H1 (cell line): ENCODE measurements at regions of chr1 and their contacts with region 1.

Region 1: GRCh38 chr1:110150330-110151174 is at the start of gene SLC6A17:
- DNase-seq: peak in 1 of 2 experiments; percentile 81
- H3K4me3 ChIP-seq: peak within 1 kb of the TSS; percentile 30 to 65 (median 44)
- H3K27ac ChIP-seq: no peak within 1 kb of the TSS
- H3K4me1 ChIP-seq: peaks cover 0 to 5% (median 2%) of the 10 kb centered on the region in 4 experiments; a peak in 3 of 7 replicates
- H3K27me3 ChIP-seq: peaks cover 37 to 86% (median 68%) of the 10 kb centered on the region in 4 experiments
- CTCF ChIP-seq: peak in 1 of 3 experiments; percentile 21; a peak in 1 of 4 replicates
- EP300 ChIP-seq: no peak
- POLR2A ChIP-seq: no peak
- RAD21 ChIP-seq: no peak
- total RNA-seq, gene SLC6A17: 0.28 and 0.29 TPM in 2 replicates

Region 2: DNA sequence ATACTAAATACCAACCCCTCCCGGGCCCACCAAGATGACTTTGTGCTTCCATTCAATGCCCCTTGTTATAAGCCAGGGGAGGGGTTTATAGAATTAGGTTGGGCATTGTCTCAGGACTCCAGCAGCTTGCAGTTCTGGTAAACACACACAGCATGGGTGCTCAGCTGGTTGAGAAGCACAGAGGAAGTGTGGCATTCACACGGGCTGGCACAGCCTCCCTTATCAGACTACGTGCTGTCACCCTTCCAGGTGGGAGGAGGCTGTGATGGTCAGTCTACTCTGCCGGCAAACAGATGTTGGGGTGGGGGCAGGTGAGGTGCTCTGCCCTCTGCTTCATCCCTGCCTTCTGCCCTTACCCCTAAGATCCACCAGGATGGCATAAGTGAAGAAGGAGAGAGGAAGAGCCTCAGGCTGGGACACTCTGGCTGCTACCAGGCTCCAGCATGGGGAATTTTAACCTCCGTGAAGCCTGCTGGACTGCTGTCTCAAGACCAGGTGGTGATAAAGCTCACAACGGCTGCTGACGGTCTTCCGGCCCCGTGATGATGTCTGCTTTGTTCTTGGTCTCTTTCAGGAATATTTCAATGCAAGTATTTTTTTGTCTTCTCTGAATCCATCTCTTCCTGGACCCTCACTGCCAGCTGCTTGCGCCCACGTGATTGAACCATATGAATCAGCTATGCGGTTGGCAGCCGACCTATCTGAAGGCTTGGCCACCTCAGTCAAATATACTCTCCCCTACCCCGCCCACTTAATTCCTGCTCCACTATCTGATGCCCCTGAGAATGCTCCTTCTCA is 15.1 kb before region 1 on chr1:
- CTCF ChIA-PET with region 1: interaction called, 10 read pairs
- POLR2A ChIA-PET with region 1: interaction called, 3 read pairs
- DNase-seq: no peak
- H3K4me3 ChIP-seq: no peak overlapping the region
- H3K27ac ChIP-seq: no peak overlapping the region
- H3K4me1 ChIP-seq: peaks cover 7 to 25% (median 17%) of the 10 kb centered on the region in 4 experiments
- H3K27me3 ChIP-seq: peaks cover 0 to 2% (median 0%) of the 10 kb centered on the region in 4 experiments; a peak in 3 of 7 replicates
- CTCF ChIP-seq: no peak
- EP300 ChIP-seq: no peak
- POLR2A ChIP-seq: no peak
- RAD21 ChIP-seq: no peak

Region 3: GRCh38 chr1:110161877-110162276 is 11.3 kb after region 1 on chr1:
- CTCF ChIA-PET with region 1: interaction called, 19 read pairs
- POLR2A ChIA-PET with region 1: interaction called, 4 read pairs
- DNase-seq: no peak
- H3K4me3 ChIP-seq: no peak overlapping the region
- H3K27ac ChIP-seq: no peak overlapping the region
- H3K4me1 ChIP-seq: no peaks in the 10 kb centered on the region; a peak in 1 of 7 replicates
- H3K27me3 ChIP-seq: no peaks in the 10 kb centered on the region; a peak in 1 of 7 replicates
- CTCF ChIP-seq: no peak
- EP300 ChIP-seq: no peak
- POLR2A ChIP-seq: no peak
- RAD21 ChIP-seq: no peak

Region 4: GRCh38 chr1:110188035-110188618 is 37.6 kb after region 1 on chr1:
- CTCF ChIA-PET with region 1: no interaction called
- POLR2A ChIA-PET with region 1: no interaction called
- DNase-seq: no peak
- H3K4me3 ChIP-seq: no peak overlapping the region
- H3K27ac ChIP-seq: no peak overlapping the region
- H3K4me1 ChIP-seq: peaks cover 0 to 2% (median 0%) of the 10 kb centered on the region in 4 experiments; a peak in 1 of 7 replicates
- H3K27me3 ChIP-seq: no peaks in the 10 kb centered on the region
- CTCF ChIP-seq: no peak
- EP300 ChIP-seq: no peak
- POLR2A ChIP-seq: no peak
- RAD21 ChIP-seq: no peak

Region 5: DNA sequence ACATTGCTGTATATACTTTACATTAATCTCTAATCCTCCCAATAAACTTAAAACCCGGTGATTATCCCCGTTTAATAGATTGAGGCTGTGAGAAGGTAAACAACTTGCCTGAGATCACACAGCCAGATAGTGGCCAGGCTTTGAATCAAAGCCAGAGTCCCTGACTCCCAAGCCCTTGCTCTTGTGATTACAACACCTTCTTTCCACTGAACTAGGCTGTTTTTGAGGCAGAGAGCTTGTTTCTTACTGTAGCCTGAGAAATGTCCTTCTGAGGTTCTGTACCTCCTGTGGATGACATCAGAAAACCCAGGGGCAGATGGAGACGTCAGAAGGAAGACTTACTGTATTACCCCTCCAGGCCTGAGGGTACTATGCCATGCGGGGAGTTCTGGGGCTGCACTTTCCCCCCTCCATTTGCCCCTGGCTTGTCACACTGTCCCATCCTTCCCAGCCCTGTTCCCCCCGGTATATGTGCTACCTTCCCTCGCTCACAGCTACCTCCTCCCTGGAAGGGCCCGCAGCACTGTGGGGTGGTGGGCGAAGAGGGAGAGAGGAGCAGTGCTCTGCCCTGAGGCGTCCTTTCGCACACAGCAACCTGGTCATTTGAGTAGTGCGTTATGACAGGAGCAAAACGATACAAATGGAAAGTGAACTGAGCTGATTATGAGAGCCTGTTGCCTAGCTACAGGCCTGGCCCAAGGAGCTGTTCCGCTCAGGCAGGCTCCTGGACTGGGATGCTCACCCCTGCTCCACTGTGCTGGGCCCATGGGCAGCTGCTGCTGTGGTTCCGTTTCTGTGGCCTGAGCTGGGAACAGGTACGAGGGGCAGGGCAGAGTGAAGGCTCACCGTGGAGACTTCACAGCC is 64.2 kb after region 1 on chr1:
- CTCF ChIA-PET with region 1: no interaction called
- POLR2A ChIA-PET with region 1: no interaction called
- DNase-seq: no peak
- H3K4me3 ChIP-seq: no peak overlapping the region
- H3K27ac ChIP-seq: no peak overlapping the region
- H3K4me1 ChIP-seq: peaks cover 0 to 18% (median 16%) of the 10 kb centered on the region in 4 experiments; a peak in 6 of 7 replicates
- H3K27me3 ChIP-seq: peaks cover 5 to 20% (median 19%) of the 10 kb centered on the region in 4 experiments; a peak in 6 of 7 replicates
- CTCF ChIP-seq: no peak
- EP300 ChIP-seq: no peak
- POLR2A ChIP-seq: no peak
- RAD21 ChIP-seq: no peak

Region 6: DNA sequence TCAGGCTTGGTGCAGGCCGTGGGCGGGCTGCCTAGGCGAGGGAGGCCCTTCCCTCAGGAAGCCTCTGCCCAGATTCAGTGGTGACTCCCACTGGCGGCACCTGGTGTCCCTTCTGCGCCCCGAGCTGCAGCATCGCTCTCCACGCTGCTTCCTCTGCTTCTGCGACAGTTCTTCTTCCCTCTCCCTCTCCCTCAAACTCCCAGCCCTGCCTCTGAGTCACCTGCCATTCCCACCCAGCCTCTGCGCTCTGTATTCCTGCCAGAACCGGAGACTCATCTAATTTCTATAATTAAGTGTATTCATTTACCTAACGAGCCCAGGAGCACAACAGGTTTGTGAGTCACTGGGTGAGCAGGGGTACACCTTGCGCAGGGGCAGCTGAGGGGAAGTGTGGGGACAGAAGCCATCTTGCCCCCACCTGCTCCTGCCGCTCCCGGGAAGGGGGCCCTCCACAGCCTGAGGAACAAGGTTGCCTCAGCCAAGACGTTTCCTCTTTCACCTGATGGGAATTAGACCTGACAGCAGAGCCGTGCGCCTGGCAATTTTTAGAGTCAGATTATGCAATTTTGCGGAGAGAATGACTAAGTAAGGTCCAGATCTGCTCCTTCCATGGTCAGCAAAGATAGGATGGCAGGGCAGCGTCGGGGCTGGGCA is 78.9 kb after region 1 on chr1:
- CTCF ChIA-PET with region 1: no interaction called
- POLR2A ChIA-PET with region 1: no interaction called
- DNase-seq: no peak
- H3K4me3 ChIP-seq: no peak overlapping the region
- H3K27ac ChIP-seq: no peak overlapping the region
- H3K4me1 ChIP-seq: peaks cover 0 to 6% (median 3%) of the 10 kb centered on the region in 4 experiments; a peak in 1 of 7 replicates
- H3K27me3 ChIP-seq: no peaks in the 10 kb centered on the region
- CTCF ChIP-seq: peak in 1 of 3 experiments; percentile 2; a peak in 1 of 4 replicates
- EP300 ChIP-seq: no peak
- POLR2A ChIP-seq: no peak
- RAD21 ChIP-seq: peak in 1 of 2 experiments; percentile 20; a peak in 1 of 4 replicates